Ascending aorta (tissue), 2 donors: ENCODE measurements at regions of chr11 and their contacts with region 1.

Region 1: DNA sequence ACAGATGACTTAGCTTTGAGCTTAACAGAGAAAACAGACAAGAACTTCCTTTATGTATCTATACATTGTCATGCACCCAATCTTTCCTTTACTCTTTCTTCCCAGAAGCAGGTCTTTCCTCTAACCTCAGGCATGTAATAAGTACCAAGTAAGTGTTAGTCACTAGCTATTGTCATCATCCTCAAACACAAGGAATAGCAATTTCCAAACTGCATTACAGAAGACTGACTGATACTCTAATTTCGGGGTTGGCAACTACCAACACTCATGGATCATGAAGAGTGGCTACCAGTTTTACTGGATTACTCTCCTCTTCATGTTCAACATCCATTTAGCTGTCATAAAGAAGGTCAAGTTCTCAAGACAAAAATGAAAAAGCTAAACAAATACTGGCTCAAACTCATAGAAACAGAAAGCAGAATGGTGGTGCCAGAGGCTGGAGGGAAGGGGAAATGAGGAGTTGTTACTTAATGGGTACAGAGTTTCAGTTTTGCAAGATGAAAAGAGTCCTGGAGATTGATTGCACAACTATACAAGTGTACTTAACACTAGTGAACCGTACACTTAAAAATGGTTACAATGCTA is 111.6 kb downstream of the SIK3 start:
- DNase-seq: no peak
- H3K4me3 ChIP-seq: no peak overlapping the region
- H3K27ac ChIP-seq: peak overlapping the region; percentile 30 to 37
- H3K4me1 ChIP-seq: peaks cover 4 to 41% of the 10 kb centered on the region in 2 donors
- H3K27me3 ChIP-seq: no peaks in the 10 kb centered on the region
- CTCF ChIP-seq: no peak

Region 2: DNA sequence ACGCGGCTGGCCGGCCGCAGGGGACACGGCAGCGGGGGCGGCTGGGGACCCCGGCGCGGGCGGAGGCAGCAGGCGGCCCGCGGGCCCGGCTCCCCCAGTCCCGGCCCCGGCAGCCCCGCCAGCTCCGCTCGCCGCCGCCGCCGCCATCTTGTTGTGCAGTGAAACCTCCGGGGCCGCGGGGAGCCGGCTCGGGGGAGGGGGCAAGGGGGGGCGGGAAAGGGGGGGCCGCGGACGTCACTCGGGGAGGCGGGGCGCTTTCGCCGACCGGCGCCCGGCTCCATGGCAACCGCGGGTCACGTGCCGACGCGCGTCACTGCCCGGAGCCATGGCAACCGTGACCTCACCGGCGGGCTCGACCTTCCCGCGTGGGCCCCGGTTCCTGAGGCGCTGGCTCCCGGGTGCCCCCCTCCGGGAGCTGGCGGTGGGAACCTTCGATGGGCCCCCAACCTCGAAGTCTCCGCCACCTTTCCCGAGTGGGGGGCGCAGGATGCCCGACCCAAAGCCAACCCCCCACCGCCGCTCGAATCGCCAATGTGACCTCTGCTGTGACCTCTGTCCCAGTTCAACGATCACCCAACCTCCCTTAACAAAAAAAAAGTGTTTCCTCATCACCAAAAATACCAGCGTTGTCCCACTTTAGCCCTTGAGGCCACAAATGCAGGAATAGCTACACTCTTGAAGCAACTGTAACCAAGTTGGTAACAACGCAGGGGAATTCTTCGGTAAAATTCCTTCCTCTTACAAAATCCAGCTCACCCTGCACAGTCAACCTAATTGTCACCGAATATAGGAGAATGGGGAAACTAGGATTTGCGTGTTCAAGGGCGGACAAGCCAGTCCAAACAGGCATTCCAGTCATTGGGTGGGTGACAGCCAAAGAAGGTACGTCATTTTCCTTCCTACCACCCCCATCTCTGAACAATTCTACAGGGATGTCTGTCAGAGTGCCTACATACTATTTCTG is 111.9 kb after region 1 on chr11 and contains the start of gene SIK3:
- intact Hi-C with region 1: loop called (anchors 2 kb)
- DNase-seq: peak; percentile 62 to 96
- H3K4me3 ChIP-seq: peak within 1 kb of the TSS; percentile 99
- H3K27ac ChIP-seq: peak within 1 kb of the TSS; percentile 90 to 99
- H3K4me1 ChIP-seq: peaks cover 4 to 32% of the 10 kb centered on the region in 2 donors
- H3K27me3 ChIP-seq: no peaks in the 10 kb centered on the region
- CTCF ChIP-seq: peak; percentile 29 to 52 (median 49)
- total RNA-seq, gene SIK3: 22.5 TPM